Naive thymus-derived CD8-positive, alpha-beta T cell (primary cell): ENCODE measurements at regions of chr13 and their contacts with region 1.

Region 1: GRCh38 chr13:75549262-75550158 is at the start of gene UCHL3:
- DNase-seq: peak; percentile 92 to 98 (median 97)
- ATAC-seq: peak; percentile 91 to 92
- H3K4me3 Mint-ChIP-seq: peak within 1 kb of the TSS; percentile 87 to 97 (median 95)
- H3K27ac Mint-ChIP-seq: peak within 1 kb of the TSS; percentile 92 to 99 (median 98)
- H3K4me1 Mint-ChIP-seq: peaks cover 26 to 47% (median 44%) of the 10 kb centered on the region in 4 donors
- H3K27me3 Mint-ChIP-seq: peaks cover 0 to 3% (median 0%) of the 10 kb centered on the region in 5 donors
- polyA plus RNA-seq, gene UCHL3: 44.3 to 50.1 (median 48.6) TPM

Region 2: DNA sequence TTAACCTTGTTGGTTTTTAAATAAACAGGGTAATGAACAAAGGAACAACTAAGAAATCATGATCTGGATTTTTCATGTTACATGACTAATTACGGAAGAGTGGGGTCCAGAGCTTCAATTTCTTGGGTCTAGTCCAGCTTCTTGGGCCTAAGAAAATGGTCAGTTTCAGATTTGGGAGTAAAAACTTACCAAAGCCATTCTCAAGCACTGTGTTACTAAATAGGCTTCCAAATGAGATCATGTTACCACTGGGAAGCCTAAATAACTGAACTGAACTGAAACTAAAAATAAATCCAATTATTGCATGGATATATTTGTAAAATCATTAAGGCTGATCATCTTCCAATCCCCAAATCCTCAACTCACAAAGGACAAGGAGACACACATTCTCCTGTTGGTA is 81.4 kb before region 1 on chr13:
- POLR2A ChIA-PET with region 1: no interaction called
- DNase-seq: no peak
- ATAC-seq: no peak
- H3K4me3 Mint-ChIP-seq: no peak overlapping the region
- H3K27ac Mint-ChIP-seq: no peak overlapping the region
- H3K4me1 Mint-ChIP-seq: no peaks in the 10 kb centered on the region
- H3K27me3 Mint-ChIP-seq: peaks cover 0 to 13% (median 9%) of the 10 kb centered on the region in 5 donors

Region 3: DNA sequence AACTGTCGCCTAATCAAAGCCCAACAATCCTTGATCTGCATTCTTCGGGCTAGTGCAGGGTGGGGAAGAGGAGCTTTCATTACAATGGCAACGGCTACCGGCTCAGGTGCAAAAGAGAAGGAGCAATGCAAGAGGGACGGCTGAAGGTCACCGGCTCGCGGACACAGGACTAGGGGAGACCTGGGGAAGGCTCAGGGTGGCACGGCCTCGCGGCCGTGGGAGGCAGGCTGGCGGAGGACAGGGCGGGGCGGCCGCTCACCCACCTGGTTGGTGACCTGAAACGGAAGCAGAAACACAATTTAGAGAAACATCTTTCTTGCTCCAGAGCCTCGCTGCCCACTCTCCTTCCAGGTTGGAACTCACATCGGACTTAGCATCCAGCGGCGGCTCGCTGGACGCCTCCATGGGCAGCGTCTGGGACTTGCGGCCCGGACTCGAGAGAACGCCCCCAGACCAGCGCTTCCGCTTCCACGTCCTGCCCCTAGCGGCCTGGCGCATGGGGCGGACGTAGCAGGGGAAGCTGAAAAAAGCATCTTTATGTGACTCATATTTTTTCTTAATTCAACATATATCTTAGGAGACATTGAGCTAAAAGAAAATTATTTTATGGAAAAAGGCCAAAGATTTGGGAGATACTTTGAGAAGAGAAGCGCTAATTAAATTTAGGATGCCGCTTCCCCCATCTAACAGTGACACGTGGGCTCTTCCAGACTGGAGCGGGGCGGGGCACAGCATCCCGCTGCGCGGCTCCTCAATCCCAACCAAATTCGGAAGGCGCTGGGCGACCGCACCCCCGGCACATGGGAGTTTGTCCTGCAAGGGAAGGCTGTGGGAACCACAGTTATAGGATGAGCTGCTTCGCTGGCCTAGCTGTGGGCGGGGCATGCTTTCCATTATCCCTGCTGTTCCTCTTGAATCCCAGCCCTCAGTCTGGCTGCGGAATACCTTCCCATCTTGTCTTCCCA is 11.8 kb before region 1 on chr13 and contains the start of gene COMMD6:
- POLR2A ChIA-PET with region 1: interaction called, 10 read pairs
- DNase-seq: peak; percentile 39 to 80 (median 60)
- ATAC-seq: peak; percentile 92 to 93
- H3K4me3 Mint-ChIP-seq: peak within 1 kb of the TSS; percentile 91 to 99 (median 98)
- H3K27ac Mint-ChIP-seq: peak within 1 kb of the TSS; percentile 79 to 98 (median 95)
- H3K4me1 Mint-ChIP-seq: peaks cover 13 to 49% (median 43%) of the 10 kb centered on the region in 4 donors
- H3K27me3 Mint-ChIP-seq: no peaks in the 10 kb centered on the region
- polyA plus RNA-seq, gene COMMD6: 627 to 838 (median 724) TPM